AG04450 (cell line): ENCODE measurements at regions of chr20 and their contacts with region 1.

Region 1: DNA sequence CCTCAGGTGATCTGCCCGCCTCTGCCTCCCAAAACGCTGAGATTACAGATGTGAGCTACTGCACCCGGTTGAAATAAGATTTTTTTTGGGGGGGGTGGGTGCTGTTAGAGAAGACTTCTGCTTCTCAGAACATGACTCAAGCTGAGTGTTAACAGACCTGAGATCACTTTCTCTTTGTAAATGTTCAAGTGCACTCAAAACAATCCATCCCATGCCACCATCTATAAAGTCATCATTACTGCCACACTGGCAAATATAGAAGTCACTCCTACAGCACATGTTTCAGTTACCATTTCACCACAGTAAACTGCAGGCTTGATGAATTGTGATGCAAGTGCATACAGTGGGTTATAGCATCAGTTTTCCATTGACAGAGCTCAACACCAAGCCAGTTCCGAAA is 9.0 kb downstream of the VPS16 start:
- DNase-seq: no peak
- H3K4me3 ChIP-seq: no peak overlapping the region
- H3K27ac ChIP-seq: no peak overlapping the region
- H3K27me3 ChIP-seq: no peaks in the 10 kb centered on the region
- CTCF ChIP-seq: no peak

Region 2: DNA sequence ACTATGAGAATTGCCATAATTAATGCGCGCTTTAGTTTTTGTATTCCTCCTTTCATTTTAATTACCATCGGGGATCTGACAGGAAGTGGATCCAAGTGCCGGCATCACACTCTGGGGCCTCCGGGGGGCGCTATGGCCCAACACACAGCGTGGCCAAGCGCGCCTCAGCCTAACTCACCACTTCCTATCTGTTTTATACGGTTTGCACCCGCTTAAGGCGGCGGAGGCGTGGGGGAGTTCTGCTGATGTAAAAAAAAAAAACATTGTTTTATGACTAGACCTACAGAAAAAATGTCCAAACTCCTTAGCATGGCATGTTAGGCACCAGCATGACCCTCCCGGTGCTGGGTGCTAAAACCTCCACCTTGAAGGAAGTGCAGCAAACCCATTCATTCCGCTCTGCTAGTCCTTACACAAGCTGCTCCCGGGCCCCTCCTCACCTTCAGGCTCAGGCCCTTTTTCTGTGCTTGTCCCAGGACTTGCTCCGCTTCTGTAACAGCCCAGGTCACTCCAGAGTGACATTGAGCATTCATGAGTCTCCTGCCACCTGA is 161.4 kb before region 1 on chr20:
- CTCF ChIA-PET with region 1: interaction called, 15 read pairs
- POLR2A ChIA-PET with region 1: no interaction called
- DNase-seq: no peak
- H3K4me3 ChIP-seq: no peak overlapping the region
- H3K27ac ChIP-seq: no peak overlapping the region
- H3K27me3 ChIP-seq: peaks cover 41% of the 10 kb centered on the region
- CTCF ChIP-seq: peak; percentile 70

Region 3: GRCh38 chr20:2752567-2753460 is 96.7 kb before region 1 on chr20:
- CTCF ChIA-PET with region 1: interaction called, 40 read pairs
- POLR2A ChIA-PET with region 1: no interaction called
- DNase-seq: no peak
- H3K4me3 ChIP-seq: peak overlapping the region; percentile 50
- H3K27ac ChIP-seq: no peak overlapping the region
- H3K27me3 ChIP-seq: peaks cover 72% of the 10 kb centered on the region
- CTCF ChIP-seq: peak; percentile 78

Region 4: GRCh38 chr20:2834401-2835110 is 15.0 kb before region 1 on chr20:
- CTCF ChIA-PET with region 1: interaction called, 10 read pairs
- POLR2A ChIA-PET with region 1: no interaction called
- DNase-seq: no peak
- H3K4me3 ChIP-seq: no peak overlapping the region
- H3K27ac ChIP-seq: no peak overlapping the region
- H3K27me3 ChIP-seq: no peaks in the 10 kb centered on the region
- CTCF ChIP-seq: no peak

Region 5: GRCh38 chr20:3000852-3001523 is 151.5 kb after region 1 on chr20:
- CTCF ChIA-PET with region 1: interaction called, 14 read pairs
- POLR2A ChIA-PET with region 1: no interaction called
- DNase-seq: peak; percentile 37
- H3K4me3 ChIP-seq: no peak overlapping the region
- H3K27ac ChIP-seq: no peak overlapping the region
- H3K27me3 ChIP-seq: no peaks in the 10 kb centered on the region
- CTCF ChIP-seq: peak; percentile 62